B cell (primary cell): ENCODE measurements at regions of chr5 and their contacts with region 1.

Region 1: GRCh38 chr5:177390363-177391300 is 6.4 kb downstream of the SLC34A1 start:
- DNase-seq: peak; percentile 90
- ATAC-seq: peak; percentile 93
- H3K4me3 ChIP-seq: no peak overlapping the region
- H3K4me3 Mint-ChIP-seq: no peak overlapping the region
- H3K27ac ChIP-seq: no peak overlapping the region
- H3K27ac Mint-ChIP-seq: peak overlapping the region; percentile 7
- H3K4me1 ChIP-seq: peaks cover 14 to 24% of the 10 kb centered on the region in 2 donors
- H3K4me1 Mint-ChIP-seq: peaks cover 27% of the 10 kb centered on the region
- H3K27me3 ChIP-seq: peaks cover 0 to 5% (median 0%) of the 10 kb centered on the region in 4 experiments
- H3K27me3 Mint-ChIP-seq: peaks cover 3% of the 10 kb centered on the region
- CTCF ChIP-seq: peak; percentile 94

Region 2: GRCh38 chr5:177351385-177352329 is 39.0 kb before region 1 on chr5 and contains the start of gene LMAN2:
- CTCF ChIA-PET with region 1: interaction called, 14 read pairs
- POLR2A ChIA-PET with region 1: no interaction called
- intact Hi-C with region 1: loop called (anchors 2 kb)
- DNase-seq: peak; percentile 97
- ATAC-seq: peak; percentile 99
- H3K4me3 ChIP-seq: peak within 1 kb of the TSS; percentile 85 to 97 (median 90)
- H3K4me3 Mint-ChIP-seq: peak within 1 kb of the TSS; percentile 96
- H3K27ac ChIP-seq: peak within 1 kb of the TSS; percentile 87 to 93
- H3K27ac Mint-ChIP-seq: peak within 1 kb of the TSS; percentile 100
- H3K4me1 ChIP-seq: peaks cover 32 to 38% of the 10 kb centered on the region in 2 donors
- H3K4me1 Mint-ChIP-seq: peaks cover 61% of the 10 kb centered on the region
- H3K27me3 ChIP-seq: no peaks in the 10 kb centered on the region
- H3K27me3 Mint-ChIP-seq: no peaks in the 10 kb centered on the region
- CTCF ChIP-seq: no peak
- total RNA-seq, gene LMAN2: 89.4 and 99.4 TPM in 2 replicates

Region 3: GRCh38 chr5:177378884-177379883 is 11.4 kb before region 1 on chr5:
- CTCF ChIA-PET with region 1: interaction called, 12 read pairs
- POLR2A ChIA-PET with region 1: no interaction called
- intact Hi-C with region 1: no loop called
- DNase-seq: no peak
- ATAC-seq: no peak
- H3K4me3 ChIP-seq: no peak overlapping the region
- H3K4me3 Mint-ChIP-seq: no peak overlapping the region
- H3K27ac ChIP-seq: no peak overlapping the region
- H3K27ac Mint-ChIP-seq: peak overlapping the region; percentile 37
- H3K4me1 ChIP-seq: no peaks in the 10 kb centered on the region
- H3K4me1 Mint-ChIP-seq: no peaks in the 10 kb centered on the region
- H3K27me3 ChIP-seq: peaks cover 0 to 11% (median 0%) of the 10 kb centered on the region in 4 experiments
- H3K27me3 Mint-ChIP-seq: peaks cover 15% of the 10 kb centered on the region
- CTCF ChIP-seq: no peak

Region 4: GRCh38 chr5:177431317-177432142 is 40.9 kb after region 1 on chr5:
- CTCF ChIA-PET with region 1: interaction called, 11 read pairs
- POLR2A ChIA-PET with region 1: no interaction called
- intact Hi-C with region 1: no loop called
- DNase-seq: peak; percentile 95
- ATAC-seq: peak; percentile 61
- H3K4me3 ChIP-seq: peak overlapping the region in 4 of 5 experiments; percentile 29 to 35 (median 32)
- H3K4me3 Mint-ChIP-seq: peak overlapping the region; percentile 94
- H3K27ac ChIP-seq: peak overlapping the region; percentile 92 to 96
- H3K27ac Mint-ChIP-seq: peak overlapping the region; percentile 97
- H3K4me1 ChIP-seq: peaks cover 63 to 83% of the 10 kb centered on the region in 2 donors
- H3K4me1 Mint-ChIP-seq: peaks cover 65% of the 10 kb centered on the region
- H3K27me3 ChIP-seq: no peaks in the 10 kb centered on the region
- H3K27me3 Mint-ChIP-seq: no peaks in the 10 kb centered on the region
- CTCF ChIP-seq: no peak

Region 5: DNA sequence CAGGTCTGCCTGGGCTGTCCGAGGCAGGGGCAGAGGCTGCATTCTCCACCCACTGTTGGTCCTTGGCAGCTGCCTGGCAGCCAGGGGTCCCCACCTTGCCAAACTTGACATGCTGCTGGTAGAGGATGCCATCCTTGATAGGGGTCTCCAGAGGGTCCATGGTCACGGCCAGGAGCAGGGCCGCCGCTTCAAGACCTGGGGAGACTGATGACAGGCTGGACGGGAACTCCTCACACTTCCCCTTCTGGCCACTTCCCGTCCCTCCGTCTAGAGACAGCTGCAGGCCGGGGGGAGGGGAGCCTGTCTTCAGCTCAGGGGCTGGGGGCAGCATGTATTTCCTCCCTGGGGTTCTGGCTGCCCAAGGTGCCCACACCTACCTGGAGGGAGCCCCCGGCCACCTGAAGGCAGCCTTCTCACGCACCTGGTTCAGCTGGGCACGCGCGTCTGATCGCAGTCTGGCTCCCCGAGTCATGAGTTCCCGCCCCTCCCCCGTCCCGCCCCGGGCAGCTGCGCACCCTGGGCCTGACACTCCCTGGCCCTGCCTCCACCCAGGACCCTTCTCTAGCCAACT is 118.8 kb after region 1 on chr5 and contains the start of gene DOK3:
- CTCF ChIA-PET with region 1: interaction called, 26 read pairs
- POLR2A ChIA-PET with region 1: no interaction called
- intact Hi-C with region 1: no loop called
- DNase-seq: peak; percentile 81
- ATAC-seq: peak; percentile 39
- H3K4me3 ChIP-seq: peak within 1 kb of the TSS; percentile 57 to 95 (median 75)
- H3K4me3 Mint-ChIP-seq: peak within 1 kb of the TSS; percentile 94
- H3K27ac ChIP-seq: peak within 1 kb of the TSS; percentile 91 to 96
- H3K27ac Mint-ChIP-seq: peak within 1 kb of the TSS; percentile 98
- H3K4me1 ChIP-seq: peaks cover 38 to 53% of the 10 kb centered on the region in 2 donors
- H3K4me1 Mint-ChIP-seq: peaks cover 55% of the 10 kb centered on the region
- H3K27me3 ChIP-seq: no peaks in the 10 kb centered on the region
- H3K27me3 Mint-ChIP-seq: no peaks in the 10 kb centered on the region
- CTCF ChIP-seq: no peak
- total RNA-seq, gene DOK3: 113 and 115 TPM in 2 replicates